ENCODE measurements at regions of chr4 and their contacts with region 1.

Region 1: GRCh38 chr4:80184053-80184790 is 13.1 kb upstream of the PRDM8 start:
- DNase-seq: peak; percentile 80 to 97 (median 91)
- ATAC-seq: peak; percentile 96
- H3K4me3 ChIP-seq: peak overlapping the region; percentile 98
- H3K4me3 Mint-ChIP-seq: peak overlapping the region; percentile 94 to 100 (median 96)
- H3K27ac ChIP-seq: peak overlapping the region; percentile 84
- H3K27ac Mint-ChIP-seq: peak overlapping the region; percentile 86 to 98 (median 94)
- H3K4me1 ChIP-seq: peaks cover 28 to 34% of the 10 kb centered on the region in 2 donors
- H3K4me1 Mint-ChIP-seq: peaks cover 26 to 56% (median 49%) of the 10 kb centered on the region in 7 donors
- H3K27me3 ChIP-seq: no peaks in the 10 kb centered on the region
- H3K27me3 Mint-ChIP-seq: peaks cover 0 to 34% (median 0%) of the 10 kb centered on the region in 5 donors

Region 2: GRCh38 chr4:78938868-78939666 is 1245.2 kb before region 1 on chr4 and contains the start of gene PAQR3:
- CTCF ChIA-PET with region 1: no interaction called
- POLR2A ChIA-PET with region 1: no interaction called
- intact Hi-C with region 1: loop called in 1 of 2 experiments (anchors 2 kb)
- DNase-seq: peak; percentile 70 to 91 (median 86)
- ATAC-seq: peak; percentile 98
- H3K4me3 ChIP-seq: peak within 1 kb of the TSS; percentile 86
- H3K4me3 Mint-ChIP-seq: peak within 1 kb of the TSS; percentile 92 to 100 (median 98)
- H3K27ac ChIP-seq: peak within 1 kb of the TSS; percentile 82
- H3K27ac Mint-ChIP-seq: peak within 1 kb of the TSS; percentile 82 to 97 (median 92)
- H3K4me1 ChIP-seq: peaks cover 5 to 14% of the 10 kb centered on the region in 2 donors
- H3K4me1 Mint-ChIP-seq: peaks cover 23 to 54% (median 39%) of the 10 kb centered on the region in 7 donors
- H3K27me3 ChIP-seq: no peaks in the 10 kb centered on the region
- H3K27me3 Mint-ChIP-seq: peaks cover 8 to 18% (median 11%) of the 10 kb centered on the region in 5 donors
- total RNA-seq, gene PAQR3: 13.1 to 24.3 (median 15.8) TPM

Region 3: GRCh38 chr4:79645942-79646341 is 538.3 kb before region 1 on chr4:
- CTCF ChIA-PET with region 1: no interaction called
- POLR2A ChIA-PET with region 1: no interaction called
- intact Hi-C with region 1: no loop called
- DNase-seq: no peak
- ATAC-seq: no peak
- H3K4me3 ChIP-seq: no peak overlapping the region
- H3K4me3 Mint-ChIP-seq: no peak overlapping the region
- H3K27ac ChIP-seq: no peak overlapping the region
- H3K27ac Mint-ChIP-seq: no peak overlapping the region
- H3K4me1 ChIP-seq: no peaks in the 10 kb centered on the region
- H3K4me1 Mint-ChIP-seq: no peaks in the 10 kb centered on the region
- H3K27me3 ChIP-seq: no peaks in the 10 kb centered on the region
- H3K27me3 Mint-ChIP-seq: peaks cover 0 to 15% (median 4%) of the 10 kb centered on the region in 5 donors

Region 4: DNA sequence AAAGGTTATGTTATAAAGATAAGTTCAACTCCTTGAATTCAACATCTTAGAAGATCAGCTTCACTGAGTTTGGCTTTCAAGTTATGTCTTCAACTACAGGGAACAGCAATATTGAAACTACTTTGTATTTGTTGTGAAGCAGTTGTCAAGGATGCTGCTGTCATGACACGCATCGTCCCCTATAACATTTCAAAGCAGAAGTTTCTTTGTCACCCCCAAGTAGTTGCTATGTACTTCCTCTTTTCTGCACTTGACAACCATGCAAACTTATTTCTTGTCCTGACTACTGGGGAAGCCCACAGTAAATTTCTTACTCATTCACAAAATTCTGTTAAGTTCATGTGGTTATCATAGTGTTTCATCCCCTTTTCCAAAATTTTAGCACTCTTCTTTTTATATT is 125.5 kb before region 1 on chr4:
- CTCF ChIA-PET with region 1: no interaction called
- POLR2A ChIA-PET with region 1: no interaction called
- intact Hi-C with region 1: loop called (anchors 1 kb)
- DNase-seq: peak in 7 of 9 donors; percentile 53 to 89 (median 84)
- ATAC-seq: peak; percentile 96
- H3K4me3 ChIP-seq: no peak overlapping the region
- H3K4me3 Mint-ChIP-seq: peak overlapping the region; percentile 54 to 86 (median 74)
- H3K27ac ChIP-seq: peak overlapping the region; percentile 86
- H3K27ac Mint-ChIP-seq: peak overlapping the region; percentile 91 to 99 (median 96)
- H3K4me1 ChIP-seq: peaks cover 10 to 13% of the 10 kb centered on the region in 2 donors
- H3K4me1 Mint-ChIP-seq: peaks cover 12 to 50% (median 42%) of the 10 kb centered on the region in 7 donors
- H3K27me3 ChIP-seq: no peaks in the 10 kb centered on the region
- H3K27me3 Mint-ChIP-seq: no peaks in the 10 kb centered on the region

Region 5: GRCh38 chr4:80138551-80139538 is 45.4 kb before region 1 on chr4:
- CTCF ChIA-PET with region 1: interaction called, 32 read pairs
- POLR2A ChIA-PET with region 1: interaction called, 28 read pairs
- intact Hi-C with region 1: loop called (anchors 1 kb)
- DNase-seq: peak in 8 of 9 donors; percentile 50 to 77 (median 64)
- ATAC-seq: peak; percentile 89
- H3K4me3 ChIP-seq: no peak overlapping the region
- H3K4me3 Mint-ChIP-seq: peak overlapping the region in 7 of 10 donors; percentile 24 to 65 (median 48)
- H3K27ac ChIP-seq: no peak overlapping the region
- H3K27ac Mint-ChIP-seq: peak overlapping the region; percentile 58 to 91 (median 84)
- H3K4me1 ChIP-seq: peaks cover 20 to 32% of the 10 kb centered on the region in 2 donors
- H3K4me1 Mint-ChIP-seq: peaks cover 30 to 71% (median 56%) of the 10 kb centered on the region in 7 donors
- H3K27me3 ChIP-seq: no peaks in the 10 kb centered on the region
- H3K27me3 Mint-ChIP-seq: no peaks in the 10 kb centered on the region

Region 6: GRCh38 chr4:80173401-80173800 is 10.8 kb before region 1 on chr4:
- CTCF ChIA-PET with region 1: interaction called, 66 read pairs
- POLR2A ChIA-PET with region 1: interaction called, 85 read pairs
- intact Hi-C with region 1: loop called (anchors 1 kb)
- DNase-seq: peak in 8 of 9 donors; percentile 42 to 78 (median 72)
- ATAC-seq: peak; percentile 98
- H3K4me3 ChIP-seq: peak overlapping the region; percentile 26
- H3K4me3 Mint-ChIP-seq: peak overlapping the region; percentile 66 to 84 (median 76)
- H3K27ac ChIP-seq: peak overlapping the region; percentile 75
- H3K27ac Mint-ChIP-seq: peak overlapping the region; percentile 92 to 99 (median 96)
- H3K4me1 ChIP-seq: peaks cover 33 to 40% of the 10 kb centered on the region in 2 donors
- H3K4me1 Mint-ChIP-seq: peaks cover 33 to 72% (median 60%) of the 10 kb centered on the region in 7 donors
- H3K27me3 ChIP-seq: no peaks in the 10 kb centered on the region
- H3K27me3 Mint-ChIP-seq: peaks cover 0 to 2% (median 0%) of the 10 kb centered on the region in 5 donors

Region 7: GRCh38 chr4:80215449-80216052 is 31.3 kb after region 1 on chr4:
- CTCF ChIA-PET with region 1: no interaction called
- POLR2A ChIA-PET with region 1: interaction called, 3 read pairs
- intact Hi-C with region 1: loop called (anchors 1 kb)
- DNase-seq: peak in 6 of 9 donors; percentile 28 to 57 (median 38)
- ATAC-seq: peak; percentile 61
- H3K4me3 ChIP-seq: no peak overlapping the region
- H3K4me3 Mint-ChIP-seq: peak overlapping the region in 2 of 10 donors; percentile 20 to 28
- H3K27ac ChIP-seq: no peak overlapping the region
- H3K27ac Mint-ChIP-seq: no peak overlapping the region
- H3K4me1 ChIP-seq: no peaks in the 10 kb centered on the region
- H3K4me1 Mint-ChIP-seq: peaks cover 0 to 7% (median 0%) of the 10 kb centered on the region in 7 donors
- H3K27me3 ChIP-seq: peaks cover 0 to 4% of the 10 kb centered on the region in 2 donors
- H3K27me3 Mint-ChIP-seq: peaks cover 0 to 61% (median 37%) of the 10 kb centered on the region in 5 donors

Region 8: GRCh38 chr4:80322716-80323115 is 138.5 kb after region 1 on chr4:
- CTCF ChIA-PET with region 1: no interaction called
- POLR2A ChIA-PET with region 1: no interaction called
- intact Hi-C with region 1: no loop called
- DNase-seq: peak in 2 of 9 donors; percentile 2 to 17
- ATAC-seq: no peak
- H3K4me3 ChIP-seq: no peak overlapping the region
- H3K4me3 Mint-ChIP-seq: no peak overlapping the region
- H3K27ac ChIP-seq: no peak overlapping the region
- H3K27ac Mint-ChIP-seq: peak overlapping the region in 1 of 9 donors; percentile 33
- H3K4me1 ChIP-seq: no peaks in the 10 kb centered on the region
- H3K4me1 Mint-ChIP-seq: peaks cover 0 to 6% (median 5%) of the 10 kb centered on the region in 7 donors
- H3K27me3 ChIP-seq: no peaks in the 10 kb centered on the region
- H3K27me3 Mint-ChIP-seq: peaks cover 0 to 9% (median 3%) of the 10 kb centered on the region in 5 donors